ENCODE measurements at regions of chr2 and their contacts with region 1.

Region 1: GRCh38 chr2:41853427-41854216 is 194.2 kb upstream of the PKDCC start:
- DNase-seq: peak; percentile 61 to 77
- ATAC-seq: peak; percentile 83; a peak in 5 of 6 replicates
- H3K4me3 ChIP-seq: no peak overlapping the region
- H3K27ac ChIP-seq: peak overlapping the region; percentile 57 to 70
- H3K4me1 ChIP-seq: peaks cover 28% of the 10 kb centered on the region
- CTCF ChIP-seq: peak; percentile 98
- EP300 ChIP-seq: no peak
- POLR2A ChIP-seq: no peak
- RAD21 ChIP-seq: peak; percentile 99

Region 2: GRCh38 chr2:41127351-41127750 is 726.3 kb before region 1 on chr2:
- CTCF ChIA-PET with region 1: no interaction called
- POLR2A ChIA-PET with region 1: no interaction called
- DNase-seq: no peak
- ATAC-seq: no peak
- H3K4me3 ChIP-seq: no peak overlapping the region
- H3K27ac ChIP-seq: no peak overlapping the region
- H3K4me1 ChIP-seq: no peaks in the 10 kb centered on the region
- CTCF ChIP-seq: no peak
- EP300 ChIP-seq: no peak
- POLR2A ChIP-seq: no peak
- RAD21 ChIP-seq: no peak

Region 3: DNA sequence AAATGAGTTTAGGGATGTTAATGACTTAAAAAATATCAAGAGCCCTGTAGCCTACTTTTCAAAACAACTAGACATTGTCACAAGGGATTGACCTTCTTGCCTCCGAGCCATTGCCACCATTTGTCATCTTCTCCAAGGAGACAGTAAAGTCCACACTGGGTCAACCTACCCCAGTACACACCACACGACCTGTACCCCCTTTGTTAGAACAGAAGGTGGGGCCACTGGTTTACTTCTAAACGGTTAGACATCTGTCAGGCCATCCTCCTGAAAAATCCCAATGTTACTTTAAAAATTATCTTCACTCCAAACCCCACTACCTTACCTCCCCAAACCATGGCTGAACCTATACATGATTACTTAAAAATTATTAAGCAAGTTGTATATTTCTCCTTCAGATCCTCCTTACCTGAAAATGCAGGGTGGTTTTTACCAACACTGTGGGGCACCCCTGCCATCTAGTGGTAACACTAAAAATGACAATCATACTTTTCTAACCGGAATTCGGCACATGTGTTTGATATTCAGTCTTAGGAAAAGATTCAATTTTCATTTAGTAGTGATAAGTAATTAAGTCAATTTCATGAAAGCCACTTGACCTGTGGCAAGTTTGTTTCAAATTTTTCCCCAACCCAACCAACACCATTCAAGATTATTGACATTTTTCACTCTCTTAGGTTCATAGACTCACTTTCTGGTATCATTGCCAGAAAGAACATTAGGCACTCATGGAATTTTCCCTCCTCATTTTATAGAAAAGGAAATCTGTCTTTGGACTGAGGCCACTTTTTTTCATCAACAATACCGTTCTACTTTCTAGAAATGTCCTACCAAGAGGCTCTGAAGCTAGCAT is 71.1 kb before region 1 on chr2:
- CTCF ChIA-PET with region 1: no interaction called
- POLR2A ChIA-PET with region 1: no interaction called
- DNase-seq: peak; percentile 53 to 56
- ATAC-seq: peak; percentile 47 to 76; a peak in 5 of 6 replicates
- H3K4me3 ChIP-seq: no peak overlapping the region
- H3K27ac ChIP-seq: no peak overlapping the region
- H3K4me1 ChIP-seq: no peaks in the 10 kb centered on the region
- CTCF ChIP-seq: peak; percentile 97
- EP300 ChIP-seq: no peak
- POLR2A ChIP-seq: no peak
- RAD21 ChIP-seq: peak; percentile 96 to 98

Region 4: GRCh38 chr2:41840702-41841551 is 12.7 kb before region 1 on chr2:
- CTCF ChIA-PET with region 1: interaction called, 47 read pairs
- POLR2A ChIA-PET with region 1: interaction called, 4 read pairs
- DNase-seq: peak; percentile 97 to 99
- ATAC-seq: peak; percentile 98 to 100
- H3K4me3 ChIP-seq: peak overlapping the region; percentile 67
- H3K27ac ChIP-seq: peak overlapping the region; percentile 86 to 95
- H3K4me1 ChIP-seq: peaks cover 11% of the 10 kb centered on the region
- CTCF ChIP-seq: peak; percentile 99
- EP300 ChIP-seq: no peak
- POLR2A ChIP-seq: peak; percentile 77
- RAD21 ChIP-seq: peak; percentile 97 to 98

Region 5: DNA sequence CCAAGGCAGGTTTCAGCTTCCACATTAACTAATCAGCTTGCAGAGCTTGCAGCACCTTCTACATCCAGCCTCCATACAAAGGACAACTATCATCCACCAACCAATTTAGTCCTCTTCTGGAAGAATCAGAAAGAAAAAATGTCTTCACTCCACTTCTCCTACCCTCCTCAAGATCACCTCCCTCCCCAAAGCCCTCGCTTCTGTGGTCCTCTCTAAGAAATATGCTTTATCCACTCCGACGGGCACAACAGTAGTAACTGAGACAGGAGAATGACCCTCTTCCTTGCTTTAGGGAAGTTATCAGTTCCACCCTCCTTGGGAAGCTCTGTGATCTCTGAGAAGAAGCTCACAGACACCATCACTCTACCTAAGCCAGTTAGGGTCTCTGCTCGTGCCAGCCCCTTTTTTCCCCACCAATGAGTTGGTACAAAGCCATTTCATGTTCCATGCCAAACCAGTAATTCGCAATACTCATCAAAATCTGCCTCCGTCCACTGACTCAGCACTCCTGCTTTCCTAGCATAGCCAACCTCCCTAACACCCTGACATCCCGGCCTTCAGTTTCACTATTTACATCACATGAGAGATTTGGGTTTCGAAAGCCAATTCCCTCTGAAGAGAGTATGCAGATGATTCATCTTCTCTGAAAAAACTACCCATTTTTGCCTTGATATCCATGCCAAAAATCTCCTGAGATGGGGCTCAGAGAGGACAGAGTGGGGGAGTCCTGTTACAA is 80.1 kb after region 1 on chr2:
- CTCF ChIA-PET with region 1: interaction called, 14 read pairs
- POLR2A ChIA-PET with region 1: no interaction called
- DNase-seq: peak; percentile 79 to 88
- ATAC-seq: peak; percentile 74 to 75
- H3K4me3 ChIP-seq: no peak overlapping the region
- H3K27ac ChIP-seq: peak overlapping the region; percentile 74 to 91
- H3K4me1 ChIP-seq: peaks cover 88% of the 10 kb centered on the region
- CTCF ChIP-seq: no peak
- EP300 ChIP-seq: peak; percentile 79 to 93; a peak in 4 of 5 replicates
- POLR2A ChIP-seq: no peak
- RAD21 ChIP-seq: peak in 1 of 2 experiments; percentile 34; a peak in 1 of 5 replicates

Region 6: DNA sequence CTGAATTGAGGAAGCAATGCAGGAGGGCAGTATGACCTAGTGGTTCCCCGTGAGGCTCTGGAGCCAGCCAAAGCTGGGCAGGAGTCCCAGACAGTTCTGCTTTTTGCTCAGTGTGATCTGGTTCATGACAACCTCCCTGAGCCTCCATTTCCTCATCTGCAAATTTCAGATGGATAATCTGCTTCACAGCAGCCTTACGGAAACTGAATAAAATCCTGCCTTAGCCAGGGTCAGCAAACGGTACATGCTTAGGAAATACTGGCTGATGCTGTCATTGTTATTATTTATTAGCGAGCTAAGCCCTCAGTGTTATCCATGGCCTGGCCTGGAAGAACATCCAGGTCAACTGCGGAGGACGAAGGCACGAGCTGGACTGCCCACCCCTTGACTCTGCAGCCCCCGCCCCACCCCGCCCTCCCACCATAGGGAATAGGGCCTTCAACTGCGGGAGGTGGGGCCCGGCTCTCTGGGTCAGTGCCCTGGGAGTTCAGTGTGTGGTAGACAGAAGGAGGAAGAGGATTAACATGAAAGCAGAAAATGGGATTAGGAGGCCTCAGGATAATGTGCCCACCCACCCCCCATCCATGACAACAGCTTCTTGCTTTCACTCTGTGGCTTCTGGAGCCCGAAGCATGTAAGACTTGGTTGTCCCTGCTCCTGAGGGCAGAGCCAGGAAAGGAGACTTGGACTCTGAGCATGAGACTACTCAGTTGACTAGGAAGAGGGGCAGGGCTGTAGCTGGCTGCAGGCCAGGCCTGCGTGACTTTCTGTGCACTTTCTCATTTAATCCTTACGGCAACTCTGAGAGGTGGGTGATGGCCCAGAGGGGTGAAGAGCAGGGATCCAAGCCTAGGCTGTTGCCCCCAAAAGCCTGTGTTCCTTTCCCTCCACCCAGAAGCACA is 207.3 kb after region 1 on chr2:
- CTCF ChIA-PET with region 1: interaction called, 20 read pairs
- POLR2A ChIA-PET with region 1: interaction called, 6 read pairs
- DNase-seq: no peak
- ATAC-seq: no peak
- H3K4me3 ChIP-seq: no peak overlapping the region
- H3K27ac ChIP-seq: peak overlapping the region; percentile 34 to 67; a peak in 4 of 6 replicates
- H3K4me1 ChIP-seq: peaks cover 60% of the 10 kb centered on the region
- CTCF ChIP-seq: no peak
- EP300 ChIP-seq: no peak
- POLR2A ChIP-seq: no peak
- RAD21 ChIP-seq: no peak

Region 7: DNA sequence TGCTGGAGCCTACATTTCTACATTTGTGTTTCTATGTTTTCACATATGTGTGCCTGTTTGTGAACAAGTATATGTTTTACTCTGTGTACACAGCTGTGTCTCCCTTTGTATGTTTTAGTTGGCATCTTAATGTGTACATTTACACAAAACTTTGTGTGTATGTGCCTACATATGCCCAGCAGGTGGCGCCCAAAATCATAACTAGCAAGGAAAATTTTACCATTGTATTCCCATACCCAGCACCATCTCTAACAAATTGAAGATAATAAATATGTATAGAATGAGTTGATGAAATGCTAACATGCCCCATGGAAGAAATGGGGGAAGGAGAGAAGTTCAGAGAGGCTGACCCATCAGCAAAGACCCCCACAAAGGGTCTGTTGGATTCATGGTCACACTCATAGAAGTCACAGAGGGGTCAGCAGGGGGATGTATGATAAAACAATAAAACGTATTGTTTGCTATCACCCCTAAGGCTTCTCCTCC is 242.3 kb after region 1 on chr2:
- CTCF ChIA-PET with region 1: interaction called, 715 read pairs
- POLR2A ChIA-PET with region 1: no interaction called
- DNase-seq: peak; percentile 49 to 84
- ATAC-seq: peak; percentile 67 to 76; a peak in 5 of 6 replicates
- H3K4me3 ChIP-seq: no peak overlapping the region
- H3K27ac ChIP-seq: peak overlapping the region; percentile 8 to 70; a peak in 3 of 6 replicates
- H3K4me1 ChIP-seq: peaks cover 31% of the 10 kb centered on the region
- CTCF ChIP-seq: peak; percentile 99
- EP300 ChIP-seq: no peak
- POLR2A ChIP-seq: no peak
- RAD21 ChIP-seq: peak; percentile 98 to 99

Region 8: DNA sequence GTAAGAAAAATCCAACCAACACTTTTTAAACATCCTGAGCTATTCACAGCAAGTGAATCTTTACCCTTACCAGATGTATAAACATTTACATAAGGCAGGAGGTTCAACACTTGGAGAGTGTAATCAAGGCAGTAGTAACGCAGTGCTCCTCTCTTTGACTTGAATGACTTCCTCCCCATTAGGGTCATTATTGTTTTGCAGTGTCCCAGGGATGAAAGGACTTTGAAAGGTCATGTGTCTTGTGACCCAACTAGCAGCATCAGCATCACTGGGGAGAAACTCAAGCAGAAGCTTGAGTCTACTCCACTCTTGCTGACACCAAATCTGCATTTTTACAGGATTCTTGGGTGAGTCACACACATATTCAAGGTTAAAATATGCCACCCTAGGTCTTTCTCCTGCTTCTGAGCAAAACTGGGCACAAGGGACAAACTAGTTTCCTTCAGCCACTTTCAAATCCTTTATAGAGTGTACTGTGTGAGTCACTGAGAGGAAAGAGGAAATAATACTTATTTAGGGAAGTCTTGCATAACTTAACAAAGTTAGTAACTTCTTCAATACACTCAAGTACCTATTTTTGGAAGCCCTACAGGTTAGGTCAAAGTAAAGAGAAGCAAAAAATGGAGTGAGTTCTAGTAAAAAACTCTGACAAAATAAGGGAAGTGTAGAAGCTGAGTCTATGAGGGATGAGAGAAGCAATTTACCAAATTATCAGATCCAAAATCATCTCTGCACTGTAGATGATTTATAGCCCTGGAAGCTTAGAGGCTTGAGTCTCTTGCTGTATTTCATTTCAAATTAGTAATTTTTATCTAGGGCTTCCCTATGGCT is 264.5 kb after region 1 on chr2:
- CTCF ChIA-PET with region 1: interaction called, 13 read pairs
- POLR2A ChIA-PET with region 1: no interaction called
- DNase-seq: peak in 1 of 2 experiments; percentile 86
- ATAC-seq: peak; percentile 90 to 91
- H3K4me3 ChIP-seq: no peak overlapping the region
- H3K27ac ChIP-seq: peak overlapping the region; percentile 60 to 63
- H3K4me1 ChIP-seq: peaks cover 34% of the 10 kb centered on the region
- CTCF ChIP-seq: no peak
- EP300 ChIP-seq: peak in 1 of 2 experiments; percentile 67; a peak in 2 of 5 replicates
- POLR2A ChIP-seq: no peak
- RAD21 ChIP-seq: peak; percentile 34 to 40; a peak in 4 of 5 replicates

Region 9: GRCh38 chr2:42663106-42663780 is 809.6 kb after region 1 on chr2:
- CTCF ChIA-PET with region 1: interaction called, 13 read pairs
- POLR2A ChIA-PET with region 1: no interaction called
- DNase-seq: peak; percentile 78 to 81
- ATAC-seq: peak; percentile 97 to 98
- H3K4me3 ChIP-seq: no peak overlapping the region
- H3K27ac ChIP-seq: no peak overlapping the region
- H3K4me1 ChIP-seq: no peaks in the 10 kb centered on the region
- CTCF ChIP-seq: peak; percentile 99
- EP300 ChIP-seq: no peak
- POLR2A ChIP-seq: no peak
- RAD21 ChIP-seq: peak; percentile 94 to 95